Caco-2 (cell line): ENCODE measurements at regions of chr17 and their contacts with region 1.

Region 1: DNA sequence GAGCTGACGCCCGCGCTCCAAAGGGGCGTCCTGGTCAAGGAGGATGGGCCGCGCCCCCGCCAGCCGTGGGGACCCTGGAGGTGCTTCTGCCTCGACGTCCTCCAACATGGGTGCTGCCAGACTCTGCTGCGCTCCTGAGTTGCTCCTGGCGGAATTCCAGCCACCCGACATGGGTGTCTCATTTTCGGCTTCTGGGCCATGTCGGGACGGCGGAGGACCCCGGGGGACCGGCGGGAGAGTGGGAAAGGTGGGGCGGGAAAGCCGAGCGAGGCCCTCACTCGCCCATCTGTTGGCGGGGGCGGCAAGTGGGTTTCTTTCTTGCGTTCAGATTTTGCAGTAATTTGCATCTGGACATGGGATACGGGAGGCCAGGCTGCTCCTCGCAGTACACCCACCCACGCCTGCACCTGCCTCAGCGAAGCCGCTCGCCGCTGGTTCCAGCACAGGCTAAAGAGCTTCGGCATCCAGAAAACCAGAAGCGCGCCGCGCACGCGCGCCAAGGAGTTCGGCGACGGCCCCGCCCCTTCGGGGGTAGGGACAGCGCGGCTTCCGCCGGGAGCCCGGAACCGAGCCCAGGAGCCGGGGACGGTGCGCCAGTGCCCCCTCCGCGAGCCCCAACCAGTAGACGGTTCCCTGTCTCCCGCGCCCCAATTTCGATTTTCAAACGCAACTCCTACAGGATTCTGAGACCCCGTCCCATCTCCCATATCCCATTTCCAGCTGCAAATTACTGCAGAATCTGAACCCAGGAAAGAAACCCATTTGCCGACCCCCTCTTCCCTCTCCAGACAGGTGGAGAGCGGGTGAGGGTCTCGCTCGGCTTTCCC is at the start of gene ARMC7:
- DNase-seq: peak; percentile 92 to 95
- H3K4me3 ChIP-seq: peak within 1 kb of the TSS; percentile 66
- H3K4me3 Mint-ChIP-seq: peak within 1 kb of the TSS; percentile 86
- H3K27ac Mint-ChIP-seq: no peak within 1 kb of the TSS
- H3K4me1 ChIP-seq: peaks cover 8% of the 10 kb centered on the region
- H3K4me1 Mint-ChIP-seq: peaks cover 19% of the 10 kb centered on the region
- H3K27me3 ChIP-seq: no peaks in the 10 kb centered on the region
- H3K27me3 Mint-ChIP-seq: no peaks in the 10 kb centered on the region
- CTCF ChIP-seq: no peak
- total RNA-seq, gene ARMC7: 23.6 and 26.0 TPM in 2 replicates

Region 2: GRCh38 chr17:75077496-75078283 is 31.9 kb before region 1 on chr17:
- CTCF ChIA-PET with region 1: interaction called, 8 read pairs
- POLR2A ChIA-PET with region 1: interaction called, 5 read pairs
- intact Hi-C with region 1: loop called (anchors 2 kb)
- DNase-seq: peak; percentile 77 to 79
- H3K4me3 ChIP-seq: peak overlapping the region; percentile 54
- H3K4me3 Mint-ChIP-seq: peak overlapping the region; percentile 95
- H3K27ac Mint-ChIP-seq: peak overlapping the region; percentile 93
- H3K4me1 ChIP-seq: peaks cover 32% of the 10 kb centered on the region
- H3K4me1 Mint-ChIP-seq: peaks cover 22% of the 10 kb centered on the region
- H3K27me3 ChIP-seq: no peaks in the 10 kb centered on the region
- H3K27me3 Mint-ChIP-seq: no peaks in the 10 kb centered on the region
- CTCF ChIP-seq: peak in 1 of 2 experiments; percentile 55

Region 3: GRCh38 chr17:75124041-75124818 is 14.6 kb after region 1 on chr17:
- CTCF ChIA-PET with region 1: interaction called, 30 read pairs
- POLR2A ChIA-PET with region 1: interaction called, 3 read pairs
- intact Hi-C with region 1: no loop called
- DNase-seq: peak; percentile 47 to 76
- H3K4me3 ChIP-seq: no peak overlapping the region
- H3K4me3 Mint-ChIP-seq: no peak overlapping the region
- H3K27ac Mint-ChIP-seq: peak overlapping the region; percentile 85
- H3K4me1 ChIP-seq: peaks cover 14% of the 10 kb centered on the region
- H3K4me1 Mint-ChIP-seq: peaks cover 17% of the 10 kb centered on the region
- H3K27me3 ChIP-seq: no peaks in the 10 kb centered on the region
- H3K27me3 Mint-ChIP-seq: no peaks in the 10 kb centered on the region
- CTCF ChIP-seq: no peak

Region 4: GRCh38 chr17:75173526-75173925 is 63.9 kb after region 1 on chr17:
- CTCF ChIA-PET with region 1: interaction called, 23 read pairs
- POLR2A ChIA-PET with region 1: no interaction called
- intact Hi-C with region 1: loop called (anchors 1 kb)
- DNase-seq: no peak
- H3K4me3 ChIP-seq: no peak overlapping the region
- H3K4me3 Mint-ChIP-seq: no peak overlapping the region
- H3K27ac Mint-ChIP-seq: no peak overlapping the region
- H3K4me1 ChIP-seq: no peaks in the 10 kb centered on the region
- H3K4me1 Mint-ChIP-seq: no peaks in the 10 kb centered on the region
- H3K27me3 ChIP-seq: no peaks in the 10 kb centered on the region
- H3K27me3 Mint-ChIP-seq: no peaks in the 10 kb centered on the region
- CTCF ChIP-seq: no peak

Region 5: GRCh38 chr17:75219815-75220214 is 110.2 kb after region 1 on chr17:
- CTCF ChIA-PET with region 1: interaction called, 3 read pairs
- POLR2A ChIA-PET with region 1: interaction called, 12 read pairs
- intact Hi-C with region 1: no loop called
- DNase-seq: no peak
- H3K4me3 ChIP-seq: no peak overlapping the region
- H3K4me3 Mint-ChIP-seq: no peak overlapping the region
- H3K27ac Mint-ChIP-seq: no peak overlapping the region
- H3K4me1 ChIP-seq: no peaks in the 10 kb centered on the region
- H3K4me1 Mint-ChIP-seq: no peaks in the 10 kb centered on the region
- H3K27me3 ChIP-seq: no peaks in the 10 kb centered on the region
- H3K27me3 Mint-ChIP-seq: no peaks in the 10 kb centered on the region
- CTCF ChIP-seq: no peak

Region 6: DNA sequence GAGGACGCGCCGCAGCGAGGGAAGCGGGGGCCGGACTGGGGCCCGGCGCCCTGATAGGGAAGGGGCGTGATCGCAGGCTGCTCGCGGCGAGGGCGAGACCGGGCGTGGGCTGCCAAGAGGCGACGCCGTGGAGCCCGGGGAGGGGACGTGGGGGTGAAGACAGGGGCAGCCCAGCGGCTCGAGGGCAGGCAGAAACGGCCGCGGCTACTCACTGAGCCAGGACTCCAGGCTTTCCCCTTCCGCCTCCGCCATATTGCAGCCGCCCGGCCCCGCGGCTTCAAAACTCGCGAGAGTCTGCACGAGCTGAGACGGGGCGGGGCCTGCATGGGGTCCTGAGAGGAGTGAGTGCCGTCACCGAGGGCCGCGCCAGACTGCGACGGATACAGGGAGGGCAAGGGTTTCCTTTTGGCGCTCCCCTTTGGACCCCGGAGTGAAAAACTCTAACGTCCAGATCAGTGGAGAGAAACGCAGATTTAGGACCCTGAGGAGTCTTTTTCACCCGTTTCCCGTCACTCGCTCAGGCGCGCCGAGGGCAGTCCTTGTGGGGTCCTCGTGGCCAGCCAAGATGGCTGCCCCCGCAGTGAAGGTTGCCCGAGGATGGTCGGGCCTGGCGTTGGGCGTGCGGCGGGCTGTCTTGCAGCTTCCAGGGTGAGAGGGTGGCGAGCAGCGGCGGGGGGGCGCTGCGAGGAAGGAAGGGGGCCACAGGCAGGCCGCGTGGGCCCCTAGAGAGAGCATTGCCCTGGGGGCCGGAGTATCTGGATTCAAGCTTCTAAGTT is 151.9 kb after region 1 on chr17 and contains the starts of genes GGA3 and MRPS7:
- CTCF ChIA-PET with region 1: no interaction called
- POLR2A ChIA-PET with region 1: no interaction called
- intact Hi-C with region 1: no loop called
- DNase-seq: peak; percentile 95 to 97
- H3K4me3 ChIP-seq: peak within 1 kb of the TSS; percentile 89
- H3K4me3 Mint-ChIP-seq: peak within 1 kb of the TSS; percentile 97
- H3K27ac Mint-ChIP-seq: peak within 1 kb of the TSS; percentile 100
- H3K4me1 ChIP-seq: no peaks in the 10 kb centered on the region
- H3K4me1 Mint-ChIP-seq: peaks cover 28% of the 10 kb centered on the region
- H3K27me3 ChIP-seq: no peaks in the 10 kb centered on the region
- H3K27me3 Mint-ChIP-seq: no peaks in the 10 kb centered on the region
- CTCF ChIP-seq: no peak
- total RNA-seq, gene GGA3: 90.2 and 94.4 TPM in 2 replicates
- total RNA-seq, gene MRPS7: 123 and 125 TPM in 2 replicates